ENCODE measurements at regions of chr6 and their contacts with region 1.

Region 1: GRCh38 chr6:35139908-35140655 is 1.1 kb downstream of the TCP11 start:
- DNase-seq: peak; percentile 27 to 53
- H3K4me3 ChIP-seq: no peak overlapping the region
- H3K27ac ChIP-seq: no peak overlapping the region
- H3K4me1 ChIP-seq: peaks cover 17% of the 10 kb centered on the region
- H3K27me3 ChIP-seq: no peaks in the 10 kb centered on the region
- CTCF ChIP-seq: peak; percentile 93

Region 2: GRCh38 chr6:34414999-34415858 is 724.9 kb before region 1 on chr6:
- CTCF ChIA-PET with region 1: interaction called, 9 read pairs
- POLR2A ChIA-PET with region 1: no interaction called
- intact Hi-C with region 1: loop called (anchors 5 kb)
- DNase-seq: peak in 1 of 2 experiments; percentile 60
- H3K4me3 ChIP-seq: no peak overlapping the region
- H3K27ac ChIP-seq: no peak overlapping the region
- H3K4me1 ChIP-seq: no peaks in the 10 kb centered on the region
- H3K27me3 ChIP-seq: no peaks in the 10 kb centered on the region
- CTCF ChIP-seq: peak; percentile 54

Region 3: DNA sequence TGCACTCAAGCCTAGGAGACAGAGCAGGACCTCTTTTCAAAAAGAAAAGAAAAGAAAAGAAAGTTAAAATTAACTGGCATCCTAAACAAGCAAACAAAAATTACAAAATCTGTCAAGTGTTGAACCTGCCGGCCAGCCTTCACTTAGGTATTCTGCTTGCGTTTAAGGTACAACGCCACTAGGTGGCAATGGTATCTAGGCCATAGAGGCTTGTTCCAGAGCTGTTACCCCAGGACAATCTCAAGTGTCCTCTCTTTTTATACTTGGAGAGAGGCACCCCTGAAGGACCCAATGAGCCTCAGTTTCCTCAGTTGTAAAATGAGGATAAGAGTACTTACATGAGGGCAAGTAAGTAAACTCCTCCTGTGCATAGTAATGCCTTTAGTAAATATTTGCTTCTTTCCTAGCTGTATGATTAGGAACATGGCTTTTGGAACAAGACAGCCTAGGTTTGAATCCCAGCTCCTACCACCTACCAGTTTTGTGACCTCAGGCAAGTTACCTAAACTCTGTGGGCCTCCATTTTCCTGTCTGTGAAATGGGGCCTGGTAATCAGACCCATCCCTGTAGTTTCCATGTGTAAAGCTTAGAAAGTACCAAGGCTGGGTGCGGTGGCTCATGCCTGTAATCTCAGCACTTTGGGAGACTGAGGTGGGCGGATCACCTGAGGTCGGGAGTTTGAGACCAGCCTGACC is 680.0 kb before region 1 on chr6:
- CTCF ChIA-PET with region 1: interaction called, 7 read pairs
- POLR2A ChIA-PET with region 1: no interaction called
- intact Hi-C with region 1: loop called (anchors 10 kb)
- DNase-seq: no peak
- H3K4me3 ChIP-seq: no peak overlapping the region
- H3K27ac ChIP-seq: no peak overlapping the region
- H3K4me1 ChIP-seq: peaks cover 15% of the 10 kb centered on the region
- H3K27me3 ChIP-seq: no peaks in the 10 kb centered on the region
- CTCF ChIP-seq: peak; percentile 86

Region 4: DNA sequence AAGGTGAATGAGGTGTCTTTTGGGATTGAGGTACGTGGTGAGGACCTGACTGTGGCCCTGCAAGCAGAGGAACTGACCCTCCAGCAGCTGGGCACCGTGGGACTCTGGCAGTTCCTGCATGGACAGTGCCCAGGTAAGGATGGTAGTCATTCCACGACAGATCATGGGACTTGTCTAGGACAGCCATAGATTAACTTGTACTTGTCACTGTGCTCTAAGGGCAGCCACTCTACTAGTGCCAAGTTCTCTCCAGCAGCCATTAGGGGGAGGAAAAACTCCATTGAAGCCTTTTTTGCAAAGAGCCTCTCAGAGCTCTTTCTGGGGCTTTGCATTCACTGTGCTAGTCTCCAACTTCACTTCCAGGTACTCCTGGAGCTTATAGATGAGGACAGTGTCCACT is 272.6 kb before region 1 on chr6:
- CTCF ChIA-PET with region 1: no interaction called
- POLR2A ChIA-PET with region 1: no interaction called
- intact Hi-C with region 1: loop called (anchors 10 kb)
- DNase-seq: no peak
- H3K4me3 ChIP-seq: no peak overlapping the region
- H3K27ac ChIP-seq: no peak overlapping the region
- H3K4me1 ChIP-seq: no peaks in the 10 kb centered on the region
- H3K27me3 ChIP-seq: no peaks in the 10 kb centered on the region
- CTCF ChIP-seq: no peak

Region 5: GRCh38 chr6:34986845-34987246 is 153.2 kb before region 1 on chr6:
- CTCF ChIA-PET with region 1: interaction called, 4 read pairs
- POLR2A ChIA-PET with region 1: no interaction called
- intact Hi-C with region 1: loop called (anchors 1 kb)
- DNase-seq: peak; percentile 37 to 46
- H3K4me3 ChIP-seq: no peak overlapping the region
- H3K27ac ChIP-seq: no peak overlapping the region
- H3K4me1 ChIP-seq: no peaks in the 10 kb centered on the region
- H3K27me3 ChIP-seq: no peaks in the 10 kb centered on the region
- CTCF ChIP-seq: peak; percentile 92